ENCODE measurements at regions of chr17 and their contacts with region 1.

Region 1: GRCh38 chr17:48441231-48441711 is 11.3 kb upstream of the SKAP1 start:
- DNase-seq: no peak
- ATAC-seq: peak; percentile 73
- H3K4me3 Mint-ChIP-seq: peak overlapping the region; percentile 68
- H3K27ac Mint-ChIP-seq: peak overlapping the region; percentile 87
- H3K4me1 Mint-ChIP-seq: peaks cover 84% of the 10 kb centered on the region
- H3K27me3 Mint-ChIP-seq: no peaks in the 10 kb centered on the region

Region 2: GRCh38 chr17:48429638-48430586 is 11.4 kb before region 1 on chr17 and contains the start of gene SKAP1:
- POLR2A ChIA-PET with region 1: interaction called, 34 read pairs
- DNase-seq: peak; percentile 83
- ATAC-seq: peak; percentile 56
- H3K4me3 Mint-ChIP-seq: peak within 1 kb of the TSS; percentile 97
- H3K27ac Mint-ChIP-seq: peak within 1 kb of the TSS; percentile 97
- H3K4me1 Mint-ChIP-seq: peaks cover 59% of the 10 kb centered on the region
- H3K27me3 Mint-ChIP-seq: no peaks in the 10 kb centered on the region
- total RNA-seq, gene SKAP1: 96.0 to 98.8 TPM

Measured in activated naive CD8-positive, alpha-beta T cell treated with anti-CD3 and anti-CD28 coated beads, Interleukin-2, amount 10 ng/mL, durations not matched to agents 7 days and 5 days (primary cell).